Sigmoid colon (tissue), 7 donors: ENCODE measurements at regions of chr3 and their contacts with region 1.

Region 1: DNA sequence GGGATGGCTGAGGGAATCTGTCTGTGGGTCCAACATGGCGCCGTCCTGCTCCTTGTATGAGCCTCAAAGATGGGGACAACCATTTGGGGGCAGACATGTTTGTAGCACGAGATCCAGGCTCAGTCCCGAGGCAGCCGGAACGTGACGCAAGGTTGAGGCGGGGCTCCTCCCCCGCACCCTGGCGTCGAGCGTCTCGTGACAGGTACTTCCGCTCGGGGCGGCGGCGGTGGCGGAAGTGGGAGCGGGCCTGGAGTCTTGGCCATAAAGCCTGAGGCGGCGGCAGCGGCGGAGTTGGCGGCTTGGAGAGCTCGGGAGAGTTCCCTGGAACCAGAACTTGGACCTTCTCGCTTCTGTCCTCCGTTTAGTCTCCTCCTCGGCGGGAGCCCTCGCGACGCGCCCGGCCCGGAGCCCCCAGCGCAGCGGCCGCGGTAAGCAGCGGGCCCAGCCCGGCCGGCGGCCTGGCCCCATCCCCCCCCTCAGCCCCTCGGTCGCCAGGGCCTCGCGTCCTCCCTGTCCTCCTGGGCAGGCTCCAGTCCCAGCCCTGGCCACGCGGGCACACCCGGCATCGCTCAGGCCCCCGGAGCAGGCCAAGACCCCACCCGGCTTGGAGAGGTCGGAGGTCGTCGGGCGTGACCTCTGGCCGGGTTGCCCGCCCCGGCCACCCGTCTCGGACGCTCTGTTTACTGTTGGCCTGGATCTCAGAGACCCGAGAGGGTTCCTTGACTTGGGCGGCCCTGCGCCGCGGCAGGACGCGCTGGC is at the start of gene RAB7A:
- DNase-seq: peak; percentile 99
- H3K4me3 ChIP-seq: peak within 1 kb of the TSS; percentile 80 to 99 (median 94)
- H3K27ac ChIP-seq: peak within 1 kb of the TSS; percentile 93 to 99 (median 98)
- H3K4me1 ChIP-seq: peaks cover 0 to 43% (median 38%) of the 10 kb centered on the region in 4 donors
- H3K27me3 ChIP-seq: no peaks in the 10 kb centered on the region
- CTCF ChIP-seq: no peak
- EP300 ChIP-seq: peak; percentile 43 to 99 (median 81)
- POLR2A ChIP-seq: peak; percentile 87 to 95
- total RNA-seq, gene RAB7A: 73.6 to 100.0 (median 86.8) TPM

Region 2: DNA sequence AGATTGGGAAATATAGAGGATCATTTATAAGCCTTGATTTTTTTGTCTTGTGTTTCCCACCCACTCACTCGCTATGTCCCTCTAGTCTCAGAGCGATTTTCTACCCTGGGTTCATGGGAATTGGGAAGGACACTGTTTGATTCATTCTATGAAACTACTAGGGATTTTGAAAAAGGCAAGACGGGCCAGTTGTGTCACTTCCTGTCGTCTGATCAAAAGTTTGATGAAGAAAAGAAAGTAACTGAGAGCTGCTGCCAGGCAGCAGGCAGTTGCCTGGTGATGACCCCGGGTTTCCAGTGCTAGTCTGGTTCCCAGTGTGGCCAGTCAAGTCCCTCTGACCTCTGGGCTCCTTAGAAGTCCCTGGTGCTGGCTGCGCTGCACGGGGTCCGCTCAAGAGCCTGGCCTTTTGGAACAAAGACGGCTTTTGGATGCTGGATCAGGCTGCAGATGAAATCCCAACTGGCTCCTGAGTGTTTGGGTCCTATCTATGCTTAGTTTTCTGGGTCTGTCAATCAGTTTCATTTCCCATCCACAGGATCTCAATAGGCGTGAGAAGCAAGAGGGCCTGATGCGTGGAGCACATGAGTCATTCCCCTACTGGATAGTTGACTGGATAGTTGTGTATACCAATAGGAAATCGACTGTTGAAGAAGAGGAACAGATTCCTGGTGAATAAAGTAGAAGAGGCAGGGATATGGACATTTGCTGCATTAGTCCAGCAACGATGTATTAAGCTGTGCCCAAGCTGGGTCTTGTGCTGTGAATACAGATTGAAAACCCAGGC is 483.1 kb before region 1 on chr3:
- intact Hi-C with region 1: no loop called
- DNase-seq: no peak
- H3K4me3 ChIP-seq: no peak overlapping the region
- H3K27ac ChIP-seq: no peak overlapping the region
- H3K4me1 ChIP-seq: peaks cover 0 to 6% (median 3%) of the 10 kb centered on the region in 4 donors
- H3K27me3 ChIP-seq: no peaks in the 10 kb centered on the region
- CTCF ChIP-seq: no peak
- EP300 ChIP-seq: no peak
- POLR2A ChIP-seq: no peak

Region 3: GRCh38 chr3:128650096-128651050 is 75.7 kb before region 1 on chr3 and contains the start of gene RPN1:
- intact Hi-C with region 1: loop called (anchors 2 kb)
- DNase-seq: peak; percentile 99
- H3K4me3 ChIP-seq: peak within 1 kb of the TSS; percentile 94 to 100 (median 97)
- H3K27ac ChIP-seq: peak within 1 kb of the TSS; percentile 96 to 100 (median 100)
- H3K4me1 ChIP-seq: peaks cover 0 to 23% (median 17%) of the 10 kb centered on the region in 4 donors
- H3K27me3 ChIP-seq: no peaks in the 10 kb centered on the region
- CTCF ChIP-seq: no peak
- EP300 ChIP-seq: no peak
- POLR2A ChIP-seq: peak; percentile 69 to 72
- total RNA-seq, gene RPN1: 115 to 158 (median 143) TPM

Region 4: GRCh38 chr3:128698211-128699064 is 27.7 kb before region 1 on chr3:
- intact Hi-C with region 1: loop called (anchors 2 kb)
- DNase-seq: peak; percentile 74
- H3K4me3 ChIP-seq: peak overlapping the region; percentile 48 to 70 (median 64)
- H3K27ac ChIP-seq: peak overlapping the region; percentile 83 to 89 (median 86)
- H3K4me1 ChIP-seq: peaks cover 0 to 4% (median 0%) of the 10 kb centered on the region in 4 donors
- H3K27me3 ChIP-seq: no peaks in the 10 kb centered on the region
- CTCF ChIP-seq: no peak
- EP300 ChIP-seq: no peak
- POLR2A ChIP-seq: peak in 1 of 2 donors; percentile 26

Region 5: GRCh38 chr3:128794770-128795649 is 68.9 kb after region 1 on chr3:
- intact Hi-C with region 1: loop called (anchors 2 kb)
- DNase-seq: peak; percentile 71
- H3K4me3 ChIP-seq: no peak overlapping the region
- H3K27ac ChIP-seq: peak overlapping the region; percentile 29 to 63 (median 50)
- H3K4me1 ChIP-seq: peaks cover 0 to 29% (median 23%) of the 10 kb centered on the region in 4 donors
- H3K27me3 ChIP-seq: no peaks in the 10 kb centered on the region
- CTCF ChIP-seq: peak; percentile 59 to 86 (median 81)
- EP300 ChIP-seq: no peak
- POLR2A ChIP-seq: no peak

Region 6: DNA sequence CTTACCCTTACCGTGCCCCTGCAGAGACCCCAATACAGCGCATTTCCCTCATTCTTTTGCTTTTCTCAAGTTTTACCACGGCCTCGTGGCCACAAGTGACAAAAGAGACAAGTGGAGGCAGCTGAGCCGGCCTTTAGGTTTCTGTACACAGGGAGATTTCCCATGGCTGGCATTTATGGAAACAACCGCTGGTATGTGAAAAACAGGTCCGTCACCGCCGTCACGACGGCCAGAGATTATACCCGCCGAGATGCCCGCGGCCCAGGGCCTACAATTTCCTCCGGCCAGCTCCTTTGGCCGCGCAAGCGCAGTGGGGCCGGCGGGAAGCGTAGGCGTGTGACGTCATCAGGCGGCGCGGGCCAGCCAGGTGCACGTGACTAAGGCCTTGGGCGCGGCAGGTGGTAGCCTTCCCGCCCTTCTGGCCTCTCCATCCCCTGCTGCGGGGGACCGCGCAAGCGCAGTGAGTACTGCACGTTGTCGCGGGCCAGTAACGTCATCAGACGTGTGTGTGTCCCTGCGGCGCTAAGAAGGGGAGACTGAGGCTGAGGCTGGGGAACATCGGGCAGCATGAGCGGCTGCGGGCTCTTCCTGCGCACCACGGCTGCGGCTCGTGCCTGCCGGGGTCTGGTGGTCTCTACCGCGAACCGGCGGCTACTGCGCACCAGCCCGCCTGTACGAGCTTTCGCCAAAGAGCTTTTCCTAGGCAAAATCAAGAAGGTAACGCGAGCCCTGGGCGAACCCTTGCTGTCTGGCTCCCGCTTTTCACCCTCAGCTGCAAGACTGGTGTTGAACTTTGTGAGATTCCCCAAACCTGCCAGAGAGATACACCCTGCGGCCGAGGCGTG is 153.2 kb after region 1 on chr3 and contains the start of gene ACAD9:
- intact Hi-C with region 1: loop called (anchors 2 kb)
- DNase-seq: peak; percentile 99
- H3K4me3 ChIP-seq: peak within 1 kb of the TSS; percentile 62 to 81 (median 68)
- H3K27ac ChIP-seq: peak within 1 kb of the TSS; percentile 94 to 97 (median 96)
- H3K4me1 ChIP-seq: peaks cover 0 to 37% (median 29%) of the 10 kb centered on the region in 4 donors
- H3K27me3 ChIP-seq: no peaks in the 10 kb centered on the region
- CTCF ChIP-seq: no peak
- EP300 ChIP-seq: peak in 1 of 4 donors; percentile 86
- POLR2A ChIP-seq: peak; percentile 90 to 97
- total RNA-seq, gene ACAD9: 30.3 to 40.5 (median 34.4) TPM